Head of caudate nucleus (tissue), 42 donors: ENCODE measurements at regions of chr14 and their contacts with region 1.

Region 1: DNA sequence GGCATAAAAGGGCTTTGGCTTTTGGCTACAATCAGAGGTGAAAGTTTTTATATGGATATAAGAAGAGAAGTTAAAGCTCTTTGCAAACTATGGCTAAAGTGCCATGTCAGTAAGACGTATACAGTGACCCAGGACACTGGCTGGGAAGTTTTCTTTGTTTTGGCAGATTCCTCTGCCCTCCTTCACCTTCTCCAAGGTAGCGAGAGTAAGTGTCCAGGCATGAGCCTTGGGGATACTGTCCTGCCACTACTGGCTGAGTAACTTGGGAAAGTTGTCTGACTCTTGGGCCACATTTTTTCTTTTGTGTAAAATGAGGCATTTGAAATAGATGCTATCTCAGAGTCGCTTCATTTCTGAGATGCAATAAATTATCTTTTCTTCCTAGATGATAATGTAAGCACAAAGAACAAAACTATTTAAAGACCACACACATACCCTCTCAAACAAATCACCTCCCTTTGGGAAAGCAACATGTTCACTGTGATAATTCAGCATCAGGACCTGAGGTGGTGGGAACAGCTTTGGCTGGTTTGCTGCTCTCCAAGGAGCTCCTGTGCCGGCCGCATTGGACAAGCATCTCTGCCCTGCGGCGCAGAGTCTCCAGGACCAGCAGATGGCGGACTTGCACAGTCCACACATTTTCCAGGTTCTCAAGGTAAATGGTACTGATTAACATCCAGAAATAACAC is 106.3 kb downstream of the PTCSC3 start:
- DNase-seq: peak; percentile 63 to 88 (median 78)

Region 2: GRCh38 chr14:35897616-35898111 is 172.5 kb before region 1 on chr14:
- intact Hi-C with region 1: loop called (anchors 10 kb)
- DNase-seq: peak; percentile 50 to 92 (median 79)

Region 3: DNA sequence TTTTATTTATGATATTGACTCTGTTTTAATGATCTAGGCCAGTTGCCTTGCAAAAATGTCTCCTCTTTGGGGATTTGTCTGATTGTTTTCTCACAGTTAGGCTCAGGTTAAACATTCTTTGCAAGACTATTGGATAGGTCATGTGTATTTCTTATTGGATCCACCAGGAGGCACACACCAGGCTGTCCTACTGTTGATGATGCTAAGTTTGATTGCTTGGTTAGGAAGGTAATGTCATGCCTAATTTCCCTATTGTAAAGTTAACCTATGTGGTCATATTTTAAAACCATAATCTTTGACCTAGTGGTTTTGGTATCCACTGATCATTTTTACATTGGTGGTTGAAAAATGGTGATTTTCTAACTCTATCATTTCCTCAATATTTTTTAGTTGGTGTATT is 107.0 kb before region 1 on chr14:
- intact Hi-C with region 1: loop called (anchors 5 kb)
- DNase-seq: no peak

Region 4: GRCh38 chr14:35986219-35986573 is 84.0 kb before region 1 on chr14:
- intact Hi-C with region 1: no loop called
- DNase-seq: peak in 2 of 42 donors; percentile 19 to 63

Region 5: DNA sequence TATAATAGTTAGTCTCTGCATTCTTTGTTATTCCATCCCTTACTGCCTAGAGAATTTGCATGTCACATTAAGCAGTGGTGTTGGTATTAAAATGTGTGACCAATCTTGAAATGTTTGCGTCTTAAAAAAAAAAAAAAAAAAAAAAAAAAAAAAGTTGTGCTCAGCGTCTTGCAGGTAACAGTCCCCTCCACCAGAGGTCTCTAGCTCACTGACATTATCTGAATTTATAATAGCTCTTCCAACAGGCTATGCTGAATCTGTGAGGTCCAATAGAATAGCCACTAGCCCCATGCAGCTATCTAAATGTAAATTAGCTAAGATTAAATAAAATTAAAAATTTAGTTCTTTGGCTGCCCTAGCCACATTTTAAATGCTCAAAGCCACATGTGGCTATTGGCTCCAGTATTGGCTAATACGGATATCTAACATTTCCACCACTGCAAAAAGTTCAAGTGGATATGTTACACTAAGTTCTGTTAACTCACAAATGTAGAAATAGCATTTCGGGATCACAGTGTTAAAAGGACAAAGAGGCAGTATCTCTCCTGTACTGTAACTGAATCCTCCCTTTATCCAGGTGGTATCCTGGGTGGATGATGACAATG is 483.6 kb after region 1 on chr14:
- intact Hi-C with region 1: loop called (anchors 10 kb)
- DNase-seq: peak in 9 of 42 donors; percentile 17 to 54 (median 28)